Pancreas (tissue), 10 donors: ENCODE measurements at regions of chr5 and their contacts with region 1.

Region 1: GRCh38 chr5:177327539-177328522 is 16.1 kb upstream of the MXD3 start:
- DNase-seq: peak in 5 of 6 donors; percentile 51 to 75 (median 57)
- ATAC-seq: peak; percentile 21 to 49 (median 38)
- H3K4me3 ChIP-seq: no peak overlapping the region
- H3K27ac ChIP-seq: peak overlapping the region; percentile 37 to 54 (median 46)
- H3K4me1 ChIP-seq: peaks cover 5 to 25% (median 24%) of the 10 kb centered on the region in 3 donors
- H3K27me3 ChIP-seq: no peaks in the 10 kb centered on the region
- CTCF ChIP-seq: no peak

Region 2: DNA sequence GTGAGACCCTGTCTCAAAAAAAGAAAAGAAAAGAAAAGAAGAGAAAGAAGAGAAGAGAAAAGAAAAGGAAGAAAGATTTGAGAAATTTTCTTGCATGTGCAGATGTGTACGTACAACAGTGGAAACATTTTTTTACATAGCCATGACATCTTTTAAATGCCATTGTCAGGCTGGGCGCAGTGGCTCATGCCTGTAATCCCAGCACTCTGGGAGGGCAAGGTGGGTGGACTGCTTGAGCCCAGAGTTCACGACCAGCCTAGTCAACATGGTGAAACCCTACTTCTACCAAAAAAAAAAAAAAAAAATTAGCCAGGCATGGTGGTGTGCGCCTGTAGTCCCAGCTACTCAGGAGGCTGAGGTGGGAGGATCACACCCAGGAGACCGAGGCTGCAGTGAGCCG is 17.1 kb after region 1 on chr5:
- intact Hi-C with region 1: loop called in 1 of 3 experiments (anchors 2 kb)
- DNase-seq: peak in 1 of 6 donors; percentile 8
- ATAC-seq: no peak
- H3K4me3 ChIP-seq: no peak overlapping the region
- H3K27ac ChIP-seq: no peak overlapping the region
- H3K4me1 ChIP-seq: peaks cover 8 to 31% (median 12%) of the 10 kb centered on the region in 3 donors
- H3K27me3 ChIP-seq: no peaks in the 10 kb centered on the region
- CTCF ChIP-seq: no peak

Region 3: DNA sequence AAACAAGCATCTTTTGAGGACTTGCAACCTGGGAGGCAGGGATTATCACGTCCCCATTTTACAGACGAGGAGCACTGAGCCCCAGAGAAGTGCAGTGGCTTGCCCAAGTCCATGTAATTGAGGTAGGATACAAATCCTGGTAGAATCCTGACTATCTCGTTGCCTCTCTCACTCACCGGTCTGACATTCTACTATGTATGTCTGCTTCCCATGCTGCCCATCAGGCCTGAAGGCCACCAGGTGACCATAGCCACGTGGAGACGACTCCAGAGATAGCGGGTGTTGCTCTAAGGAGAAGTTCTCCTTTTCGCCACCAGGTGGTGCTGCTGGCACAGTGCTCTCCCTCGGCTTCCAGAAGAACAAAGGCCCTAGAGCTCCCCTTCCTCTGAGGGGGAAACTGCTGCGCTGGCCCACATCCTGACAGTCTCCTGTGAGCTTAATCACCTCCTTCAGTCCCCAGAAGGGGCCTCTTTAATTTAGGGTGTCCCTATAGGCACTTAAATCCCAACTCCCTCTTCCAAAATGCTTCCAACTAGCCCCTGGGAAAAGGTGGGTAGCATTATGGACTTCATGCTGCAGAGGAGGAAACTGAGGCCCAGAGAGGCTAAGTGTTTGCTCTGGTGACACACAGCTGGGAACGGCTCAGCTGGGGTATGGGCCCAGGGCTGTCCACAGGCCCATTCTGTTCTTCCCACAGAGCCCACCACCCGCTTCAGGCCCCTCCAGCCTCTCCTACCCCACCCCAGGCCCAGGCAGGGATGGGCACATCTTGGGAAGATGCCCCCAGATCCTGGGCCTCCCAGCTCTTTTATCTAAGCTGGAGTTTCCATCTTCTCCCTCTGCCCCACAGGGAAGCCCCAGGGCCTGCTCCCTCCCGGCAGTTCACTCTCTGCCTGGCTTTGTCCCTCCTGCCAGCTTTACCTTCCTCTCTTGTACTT is 62.8 kb after region 1 on chr5:
- intact Hi-C with region 1: no loop called
- DNase-seq: peak; percentile 77 to 92 (median 86)
- ATAC-seq: peak; percentile 90 to 97 (median 95)
- H3K4me3 ChIP-seq: no peak overlapping the region
- H3K27ac ChIP-seq: no peak overlapping the region
- H3K4me1 ChIP-seq: no peaks in the 10 kb centered on the region
- H3K27me3 ChIP-seq: no peaks in the 10 kb centered on the region
- CTCF ChIP-seq: peak; percentile 95 to 99 (median 98)